ENCODE measurements at regions of chr3 and their contacts with region 1.

Region 1: GRCh38 chr3:4303187-4304123 is at the start of gene SETMAR:
- DNase-seq: peak; percentile 92
- H3K4me3 Mint-ChIP-seq: peak within 1 kb of the TSS; percentile 89
- H3K27ac Mint-ChIP-seq: peak within 1 kb of the TSS; percentile 98
- H3K4me1 Mint-ChIP-seq: peaks cover 27% of the 10 kb centered on the region
- H3K27me3 Mint-ChIP-seq: no peaks in the 10 kb centered on the region
- total RNA-seq, gene SETMAR: 11.6 to 12.6 TPM

Region 2: GRCh38 chr3:3799173-3800079 is 504.0 kb before region 1 on chr3 and contains the start of gene LRRN1:
- CTCF ChIA-PET with region 1: no interaction called
- intact Hi-C with region 1: loop called (anchors 1 kb)
- DNase-seq: peak; percentile 74
- H3K4me3 Mint-ChIP-seq: peak within 1 kb of the TSS; percentile 82
- H3K27ac Mint-ChIP-seq: no peak within 1 kb of the TSS
- H3K4me1 Mint-ChIP-seq: peaks cover 17% of the 10 kb centered on the region
- H3K27me3 Mint-ChIP-seq: peaks cover 28% of the 10 kb centered on the region
- total RNA-seq, gene LRRN1: 0.49 to 0.67 TPM

Region 3: DNA sequence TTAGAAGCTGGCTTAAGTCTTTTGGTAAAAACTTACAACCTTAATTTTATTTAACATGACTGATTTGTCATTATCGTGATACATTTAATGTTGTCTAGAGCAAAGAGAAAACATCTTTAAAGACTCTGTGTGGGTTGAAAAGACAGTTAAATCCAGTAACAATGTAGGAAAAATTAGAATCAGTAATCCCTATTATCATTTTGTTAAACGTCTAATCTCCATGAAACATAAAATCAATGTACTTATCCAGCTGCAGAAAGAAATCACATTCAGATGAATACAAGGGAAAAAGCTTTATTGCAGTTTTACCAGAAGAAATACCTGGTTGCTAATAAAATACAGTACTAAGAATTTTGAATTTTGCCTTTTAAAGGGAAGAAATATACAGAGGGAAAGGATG is 21.5 kb before region 1 on chr3:
- CTCF ChIA-PET with region 1: no interaction called
- intact Hi-C with region 1: no loop called
- DNase-seq: no peak
- H3K4me3 Mint-ChIP-seq: no peak overlapping the region
- H3K27ac Mint-ChIP-seq: no peak overlapping the region
- H3K4me1 Mint-ChIP-seq: no peaks in the 10 kb centered on the region
- H3K27me3 Mint-ChIP-seq: no peaks in the 10 kb centered on the region

Region 4: GRCh38 chr3:4584456-4585249 is 281.2 kb after region 1 on chr3:
- CTCF ChIA-PET with region 1: no interaction called
- intact Hi-C with region 1: loop called (anchors 1 kb)
- DNase-seq: peak; percentile 72
- H3K4me3 Mint-ChIP-seq: peak overlapping the region; percentile 70
- H3K27ac Mint-ChIP-seq: peak overlapping the region; percentile 83
- H3K4me1 Mint-ChIP-seq: peaks cover 61% of the 10 kb centered on the region
- H3K27me3 Mint-ChIP-seq: no peaks in the 10 kb centered on the region

Region 5: DNA sequence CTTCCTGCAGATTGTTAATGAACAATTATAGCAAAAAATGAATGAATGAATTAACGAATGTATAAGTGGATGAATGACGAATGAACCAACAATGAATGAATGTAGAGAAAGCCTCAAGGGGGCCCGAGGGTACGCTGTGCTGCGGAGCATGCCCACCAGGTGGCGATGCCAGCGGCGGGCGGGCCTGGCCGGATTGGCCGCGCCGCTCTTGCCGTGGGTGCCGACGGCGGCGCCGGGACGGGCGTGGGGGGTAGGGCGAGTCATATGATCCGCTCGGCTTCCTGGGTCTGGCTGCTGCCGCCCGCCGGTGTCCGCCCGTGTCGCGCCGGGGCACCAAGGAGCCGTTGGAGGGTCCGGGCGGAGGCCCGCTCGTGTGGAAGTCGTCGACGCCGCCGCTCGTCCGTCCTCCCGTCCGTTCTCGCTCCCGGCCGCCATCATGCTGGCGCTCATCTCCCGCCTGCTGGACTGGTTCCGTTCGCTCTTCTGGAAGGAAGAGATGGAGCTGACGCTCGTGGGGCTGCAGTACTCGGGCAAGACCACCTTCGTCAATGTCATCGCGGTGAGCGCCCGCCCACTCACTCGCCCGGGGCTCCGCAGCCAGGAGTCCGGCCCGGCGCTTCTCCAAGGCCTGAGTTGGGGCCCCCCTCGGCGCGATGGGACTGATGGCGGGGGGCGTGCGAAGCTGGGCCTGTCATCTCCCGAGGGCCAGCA is 818.7 kb after region 1 on chr3 and contains the start of gene ARL8B:
- CTCF ChIA-PET with region 1: no interaction called
- intact Hi-C with region 1: loop called (anchors 1 kb)
- DNase-seq: peak; percentile 94
- H3K4me3 Mint-ChIP-seq: peak within 1 kb of the TSS; percentile 90
- H3K27ac Mint-ChIP-seq: peak within 1 kb of the TSS; percentile 90
- H3K4me1 Mint-ChIP-seq: peaks cover 39% of the 10 kb centered on the region
- H3K27me3 Mint-ChIP-seq: no peaks in the 10 kb centered on the region
- total RNA-seq, gene ARL8B: 38.4 to 39.3 TPM

Measured in activated naive CD4-positive, alpha-beta T cell treated with anti-CD3 and anti-CD28 coated beads for 36 hours (primary cell).